Activated CD4-positive, alpha-beta T cell treated with anti-CD3 and anti-CD28 coated beads for 36 hours (primary cell): ENCODE measurements at regions of chr10 and their contacts with region 1.

Region 1: DNA sequence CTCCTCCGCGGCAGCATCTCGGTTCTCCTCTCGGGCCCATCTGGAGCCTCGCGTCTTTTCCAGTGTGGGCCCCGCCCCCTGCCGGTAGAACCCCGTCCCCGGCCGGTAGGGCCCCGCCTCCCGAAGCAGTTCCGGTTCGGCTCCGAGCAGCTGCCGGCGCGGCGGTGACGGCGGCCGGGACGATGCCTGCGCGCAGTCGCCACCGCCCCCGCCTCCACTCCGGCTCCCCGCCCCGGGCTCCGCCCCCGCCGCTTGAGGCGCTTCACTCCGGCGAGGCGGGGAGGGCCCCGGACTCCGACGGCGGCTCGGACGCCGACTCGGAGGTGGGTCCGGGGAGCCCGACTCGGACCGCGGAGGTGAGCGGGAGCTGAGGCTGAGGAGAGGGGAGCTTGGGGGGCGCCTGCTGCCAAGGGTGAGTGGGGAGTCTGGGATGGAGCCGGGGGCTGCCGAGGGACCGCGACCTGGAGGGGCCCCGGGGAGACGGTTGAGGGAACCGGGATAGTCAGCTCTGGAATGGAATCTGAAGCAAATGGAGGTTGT is at the start of gene SAMD8:
- DNase-seq: peak; percentile 99
- ATAC-seq: peak; percentile 90
- H3K4me3 Mint-ChIP-seq: peak within 1 kb of the TSS; percentile 99
- H3K27ac Mint-ChIP-seq: peak within 1 kb of the TSS; percentile 99
- H3K4me1 Mint-ChIP-seq: peaks cover 51% of the 10 kb centered on the region
- H3K27me3 Mint-ChIP-seq: no peaks in the 10 kb centered on the region
- total RNA-seq, gene SAMD8: 20.5 to 20.9 TPM

Region 2: DNA sequence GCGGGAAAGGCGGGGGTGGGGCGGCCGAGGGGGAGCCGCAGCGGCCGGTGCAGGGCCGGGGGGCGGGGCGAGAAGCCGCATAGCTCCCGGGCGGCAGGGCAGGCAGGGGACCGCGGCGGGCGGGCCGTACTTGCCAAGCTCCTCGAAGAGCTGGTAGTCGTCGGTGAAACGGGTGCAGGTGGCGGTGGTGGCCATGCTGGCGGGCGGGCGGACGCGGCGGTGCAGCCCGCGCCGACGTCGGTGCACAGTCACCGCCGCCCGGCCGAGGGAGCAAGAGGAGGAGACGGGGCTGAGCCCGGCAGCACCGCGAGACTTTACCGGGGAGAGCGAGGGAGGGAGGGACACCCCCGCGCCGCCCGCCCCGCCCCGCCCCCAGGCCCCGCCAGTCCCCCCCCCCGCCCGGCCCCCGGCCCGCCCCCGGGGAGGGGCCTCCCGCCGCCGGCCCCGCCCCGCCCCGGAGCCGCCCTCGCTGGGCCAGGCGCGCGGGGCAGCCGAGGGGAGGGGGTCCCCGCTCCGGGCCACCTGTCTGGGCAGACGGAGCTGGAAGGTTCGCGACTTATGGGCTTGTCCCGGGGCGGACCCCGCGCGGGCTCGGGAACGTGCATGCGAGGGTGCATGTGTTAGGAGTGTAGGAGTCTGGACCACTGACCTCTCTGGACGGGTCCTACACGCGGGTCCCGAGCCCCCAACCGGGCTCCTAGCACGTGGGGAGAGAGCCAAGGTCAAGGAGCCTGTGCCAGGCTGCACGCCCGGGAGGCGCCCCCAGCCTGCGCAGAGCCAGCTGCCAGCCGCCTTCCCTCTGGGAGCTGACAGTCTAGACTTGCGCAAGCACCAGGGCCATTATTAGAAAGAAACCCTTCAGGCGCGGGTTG is 1236.9 kb before region 1 on chr10 and contains the start of gene CAMK2G:
- CTCF ChIA-PET with region 1: no interaction called
- POLR2A ChIA-PET with region 1: no interaction called
- intact Hi-C with region 1: loop called in 1 of 2 experiments (anchors 2 kb)
- DNase-seq: peak; percentile 92
- ATAC-seq: peak; percentile 87
- H3K4me3 Mint-ChIP-seq: peak within 1 kb of the TSS; percentile 74
- H3K27ac Mint-ChIP-seq: peak within 1 kb of the TSS; percentile 81
- H3K4me1 Mint-ChIP-seq: peaks cover 67% of the 10 kb centered on the region
- H3K27me3 Mint-ChIP-seq: no peaks in the 10 kb centered on the region
- total RNA-seq, gene CAMK2G: 16.4 to 19.4 TPM

Region 3: DNA sequence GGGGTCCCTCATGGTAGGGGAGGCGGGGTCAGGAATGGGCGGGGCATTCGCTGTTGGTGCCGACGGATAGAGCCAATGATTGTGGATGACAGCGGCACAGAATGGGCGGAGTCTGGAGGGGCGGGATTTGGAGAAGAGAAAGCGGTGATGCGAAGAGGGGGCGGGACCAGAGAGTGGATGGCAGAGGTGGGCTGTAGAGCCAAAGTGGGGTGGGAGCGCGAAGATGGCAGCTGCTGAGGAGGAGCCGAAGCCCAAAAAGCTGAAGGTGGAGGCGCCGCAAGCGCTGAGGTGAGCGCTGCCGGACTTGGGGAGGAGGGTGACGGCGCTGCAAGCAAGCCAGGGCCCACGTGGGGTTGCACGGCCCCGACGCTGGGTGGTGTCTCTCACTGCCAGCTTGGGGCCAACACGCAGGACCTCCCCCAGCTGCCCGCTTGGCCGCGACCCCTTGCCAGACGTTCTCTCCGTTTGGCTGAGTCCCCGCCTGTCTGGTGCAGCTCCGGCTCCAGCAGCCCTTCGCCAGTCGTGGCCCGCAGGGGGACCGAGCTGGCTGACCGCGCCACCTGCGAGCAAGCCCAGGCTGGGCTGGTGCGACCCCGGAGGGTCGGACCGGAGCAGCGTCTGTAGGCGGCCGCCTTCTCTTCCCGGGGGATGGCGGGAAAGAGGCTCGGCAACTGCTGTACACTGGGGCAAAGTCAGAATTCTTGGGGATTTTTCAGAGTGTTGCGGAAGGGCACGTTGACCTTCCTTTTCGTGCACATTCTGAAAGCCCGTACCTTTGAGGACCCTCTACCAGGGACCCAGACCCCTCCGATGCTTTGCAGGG is 960.2 kb before region 1 on chr10 and contains the start of gene ADK:
- CTCF ChIA-PET with region 1: no interaction called
- POLR2A ChIA-PET with region 1: interaction called, 3 read pairs
- intact Hi-C with region 1: loop called (anchors 1 to 5 kb)
- DNase-seq: peak; percentile 100
- ATAC-seq: peak; percentile 97
- H3K4me3 Mint-ChIP-seq: no peak within 1 kb of the TSS
- H3K27ac Mint-ChIP-seq: peak within 1 kb of the TSS; percentile 85
- H3K4me1 Mint-ChIP-seq: peaks cover 45% of the 10 kb centered on the region
- H3K27me3 Mint-ChIP-seq: no peaks in the 10 kb centered on the region
- total RNA-seq, gene ADK: 53.7 to 55.0 TPM

Region 4: GRCh38 chr10:75042292-75042974 is 69.0 kb before region 1 on chr10:
- CTCF ChIA-PET with region 1: no interaction called
- POLR2A ChIA-PET with region 1: no interaction called
- intact Hi-C with region 1: loop called in 1 of 2 experiments (anchors 2 kb)
- DNase-seq: peak; percentile 28
- ATAC-seq: peak; percentile 82
- H3K4me3 Mint-ChIP-seq: no peak overlapping the region
- H3K27ac Mint-ChIP-seq: peak overlapping the region; percentile 80
- H3K4me1 Mint-ChIP-seq: peaks cover 57% of the 10 kb centered on the region
- H3K27me3 Mint-ChIP-seq: peaks cover 5% of the 10 kb centered on the region

Region 5: GRCh38 chr10:75180592-75180991 is 69.2 kb after region 1 on chr10:
- CTCF ChIA-PET with region 1: no interaction called
- POLR2A ChIA-PET with region 1: no interaction called
- intact Hi-C with region 1: loop called (anchors 2 to 10 kb)
- DNase-seq: no peak
- ATAC-seq: peak; percentile 48
- H3K4me3 Mint-ChIP-seq: no peak overlapping the region
- H3K27ac Mint-ChIP-seq: peak overlapping the region; percentile 63
- H3K4me1 Mint-ChIP-seq: peaks cover 30% of the 10 kb centered on the region
- H3K27me3 Mint-ChIP-seq: no peaks in the 10 kb centered on the region

Region 6: GRCh38 chr10:75210282-75211006 is 99.0 kb after region 1 on chr10 and contains the start of gene VDAC2:
- CTCF ChIA-PET with region 1: interaction called, 4 read pairs
- POLR2A ChIA-PET with region 1: interaction called, 6 read pairs
- intact Hi-C with region 1: loop called (anchors 1 kb)
- DNase-seq: peak; percentile 96
- ATAC-seq: peak; percentile 83
- H3K4me3 Mint-ChIP-seq: peak within 1 kb of the TSS; percentile 89
- H3K27ac Mint-ChIP-seq: peak within 1 kb of the TSS; percentile 100
- H3K4me1 Mint-ChIP-seq: peaks cover 40% of the 10 kb centered on the region
- H3K27me3 Mint-ChIP-seq: no peaks in the 10 kb centered on the region
- total RNA-seq, gene VDAC2: 122 to 233 TPM